A549 (cell line): ENCODE measurements at regions of chr2 and their contacts with region 1.

Region 1: GRCh38 chr2:179129574-179130238 is 79.8 kb upstream of the CCDC141 start:
- DNase-seq: peak; percentile 7 to 10
- ATAC-seq: peak in 1 of 2 experiments; percentile 63; a peak in 1 of 6 replicates
- H3K4me3 ChIP-seq: no peak overlapping the region
- H3K27ac ChIP-seq: no peak overlapping the region; a peak in 1 of 6 replicates
- H3K4me1 ChIP-seq: no peaks in the 10 kb centered on the region
- CTCF ChIP-seq: peak; percentile 74
- EP300 ChIP-seq: no peak
- POLR2A ChIP-seq: no peak
- RAD21 ChIP-seq: peak; percentile 79

Region 2: DNA sequence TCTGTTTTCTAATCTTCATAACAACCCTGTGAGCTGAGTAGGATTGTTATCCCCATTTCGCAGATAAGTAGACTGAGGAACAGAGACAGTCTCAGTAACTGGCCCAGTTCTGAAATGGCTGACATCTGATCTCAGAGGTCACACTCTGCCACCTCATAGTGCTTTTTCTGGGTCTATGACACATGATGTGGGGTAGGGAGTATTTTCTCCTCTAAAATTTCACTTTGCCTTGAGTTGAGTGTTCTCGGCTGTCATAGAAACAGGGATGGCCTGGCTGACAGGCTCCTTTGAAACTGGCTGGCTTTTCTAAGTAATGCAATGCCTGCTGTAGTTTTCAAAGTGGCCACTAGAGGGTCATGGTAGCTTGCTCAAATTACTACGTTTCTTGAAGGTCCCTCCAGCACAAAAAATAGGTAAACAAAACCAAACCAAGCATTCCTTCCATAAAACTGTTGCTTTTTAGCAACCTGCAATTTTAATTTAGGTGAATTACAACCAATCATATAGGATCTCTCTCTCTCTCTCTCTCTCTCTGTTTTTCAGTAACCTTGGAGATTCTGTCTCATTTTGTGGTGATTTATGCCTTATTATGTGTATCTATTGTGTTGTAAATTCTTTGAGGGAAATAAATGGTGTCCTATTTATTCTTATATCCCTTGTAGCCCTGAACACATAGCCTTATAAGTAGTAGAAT is 238.3 kb before region 1 on chr2:
- CTCF ChIA-PET with region 1: interaction called, 17 read pairs
- POLR2A ChIA-PET with region 1: interaction called, 3 read pairs
- DNase-seq: peak; percentile 8 to 64
- ATAC-seq: peak; percentile 68 to 89; a peak in 5 of 6 replicates
- H3K4me3 ChIP-seq: no peak overlapping the region
- H3K27ac ChIP-seq: no peak overlapping the region
- H3K4me1 ChIP-seq: no peaks in the 10 kb centered on the region
- CTCF ChIP-seq: peak; percentile 77
- EP300 ChIP-seq: no peak
- POLR2A ChIP-seq: no peak
- RAD21 ChIP-seq: peak; percentile 63 to 65; a peak in 4 of 5 replicates

Region 3: GRCh38 chr2:179322289-179322688 is 192.6 kb after region 1 on chr2:
- CTCF ChIA-PET with region 1: no interaction called
- POLR2A ChIA-PET with region 1: no interaction called
- DNase-seq: no peak
- ATAC-seq: no peak
- H3K4me3 ChIP-seq: no peak overlapping the region
- H3K27ac ChIP-seq: no peak overlapping the region
- H3K4me1 ChIP-seq: no peaks in the 10 kb centered on the region
- CTCF ChIP-seq: no peak
- EP300 ChIP-seq: no peak
- POLR2A ChIP-seq: no peak
- RAD21 ChIP-seq: no peak

Region 4: DNA sequence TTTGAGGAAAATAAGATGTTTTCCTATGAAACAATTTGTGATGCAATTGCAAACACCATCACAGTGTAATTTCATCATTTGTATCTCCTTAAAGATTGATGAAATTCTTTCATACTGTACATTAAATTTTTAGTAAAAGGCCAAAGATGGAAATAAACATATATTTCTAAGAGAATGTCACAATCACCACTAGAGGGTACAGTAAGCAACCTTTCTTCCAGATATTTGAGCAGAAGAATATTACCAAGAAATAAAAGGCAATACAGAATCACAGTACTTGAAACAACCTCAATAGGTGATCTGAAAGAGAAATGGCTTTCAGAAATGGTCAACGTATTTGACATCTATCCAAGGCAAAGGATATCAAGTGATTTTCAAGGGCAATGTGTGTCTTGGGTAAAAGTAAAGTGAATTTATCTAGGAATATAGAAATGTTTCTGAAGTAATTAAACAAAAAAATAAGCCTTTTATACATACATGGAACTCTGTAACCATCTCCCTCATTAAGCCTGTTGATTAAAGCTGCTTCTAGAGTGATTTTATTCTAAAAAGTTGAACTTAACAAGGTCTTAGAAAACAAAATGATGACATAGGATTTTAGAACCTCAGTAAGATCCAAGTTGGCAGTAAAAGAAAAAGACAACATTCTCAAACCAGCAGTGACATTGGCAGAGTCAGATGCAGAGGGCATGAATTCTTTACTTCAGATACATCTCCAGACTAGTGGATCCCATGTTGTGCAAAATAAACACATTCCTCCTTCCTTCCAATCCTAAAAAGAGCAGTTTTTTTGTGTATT is 225.2 kb after region 1 on chr2:
- CTCF ChIA-PET with region 1: no interaction called
- POLR2A ChIA-PET with region 1: no interaction called
- DNase-seq: no peak
- ATAC-seq: no peak
- H3K4me3 ChIP-seq: no peak overlapping the region
- H3K27ac ChIP-seq: no peak overlapping the region
- H3K4me1 ChIP-seq: no peaks in the 10 kb centered on the region
- CTCF ChIP-seq: peak; percentile 19; the same call in 1 of the 3 replicates
- EP300 ChIP-seq: no peak
- POLR2A ChIP-seq: no peak
- RAD21 ChIP-seq: 0 out of 5 replicates have a peak, but pooled peaks of 1 of the 2 experiments have one; percentile 20

Region 5: DNA sequence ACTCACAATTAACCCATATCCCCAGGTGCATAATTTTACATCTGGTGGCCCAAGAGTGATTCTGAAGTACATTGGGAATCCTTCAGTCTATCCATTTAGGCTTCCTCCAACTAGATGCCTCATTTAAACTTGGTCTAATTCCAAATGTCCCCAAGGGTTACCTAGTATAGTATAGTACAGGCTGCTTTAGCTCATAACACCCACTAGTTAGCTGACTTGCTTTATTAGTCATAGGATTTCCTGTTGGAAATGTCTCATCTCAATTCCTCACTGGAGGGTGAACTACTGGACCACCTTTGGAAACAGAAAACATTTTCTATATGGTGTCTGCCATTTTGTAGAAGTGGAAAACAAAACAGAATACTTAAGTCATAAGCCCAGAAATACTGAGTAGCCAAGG is 337.4 kb after region 1 on chr2:
- CTCF ChIA-PET with region 1: no interaction called
- POLR2A ChIA-PET with region 1: no interaction called
- DNase-seq: no peak
- ATAC-seq: no peak
- H3K4me3 ChIP-seq: no peak overlapping the region
- H3K27ac ChIP-seq: no peak overlapping the region
- H3K4me1 ChIP-seq: no peaks in the 10 kb centered on the region
- CTCF ChIP-seq: no peak
- EP300 ChIP-seq: no peak
- POLR2A ChIP-seq: no peak
- RAD21 ChIP-seq: no peak